A673 (cell line): ENCODE measurements at regions of chr7 and their contacts with region 1.

Region 1: DNA sequence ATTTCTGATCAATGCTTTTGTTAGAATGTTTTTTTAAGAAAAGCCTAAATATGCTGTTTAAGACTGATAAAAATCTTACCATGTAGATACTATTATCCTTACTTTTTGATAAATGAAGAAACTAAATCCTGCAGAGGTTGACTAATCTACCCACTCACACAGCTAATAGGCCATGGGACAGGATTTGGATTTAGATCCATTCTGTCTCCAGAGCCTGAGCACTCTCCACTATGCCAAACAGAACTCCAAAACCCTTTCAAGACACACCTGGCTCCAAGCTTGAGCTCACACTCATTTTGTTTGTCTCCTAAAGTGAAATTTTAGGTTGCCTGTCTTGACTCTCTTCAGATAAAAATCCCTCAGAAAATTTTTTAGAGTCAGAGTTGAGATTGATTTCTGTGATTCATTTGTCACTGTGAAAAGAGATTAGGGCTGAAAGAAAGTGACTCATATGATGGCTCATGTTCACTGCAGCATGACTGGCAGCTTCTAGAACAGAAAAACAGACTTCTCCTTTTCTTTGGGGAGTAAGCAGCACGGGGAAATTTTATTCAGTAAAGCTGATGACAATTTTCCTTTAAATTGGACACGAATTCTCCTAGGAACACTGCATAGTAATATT is 132.3 kb upstream of the POT1 start:
- DNase-seq: peak; percentile 58
- H3K4me3 ChIP-seq: no peak overlapping the region
- H3K27ac ChIP-seq: no peak overlapping the region
- H3K4me1 ChIP-seq: no peaks in the 10 kb centered on the region
- H3K27me3 ChIP-seq: no peaks in the 10 kb centered on the region
- CTCF ChIP-seq: no peak

Region 2: DNA sequence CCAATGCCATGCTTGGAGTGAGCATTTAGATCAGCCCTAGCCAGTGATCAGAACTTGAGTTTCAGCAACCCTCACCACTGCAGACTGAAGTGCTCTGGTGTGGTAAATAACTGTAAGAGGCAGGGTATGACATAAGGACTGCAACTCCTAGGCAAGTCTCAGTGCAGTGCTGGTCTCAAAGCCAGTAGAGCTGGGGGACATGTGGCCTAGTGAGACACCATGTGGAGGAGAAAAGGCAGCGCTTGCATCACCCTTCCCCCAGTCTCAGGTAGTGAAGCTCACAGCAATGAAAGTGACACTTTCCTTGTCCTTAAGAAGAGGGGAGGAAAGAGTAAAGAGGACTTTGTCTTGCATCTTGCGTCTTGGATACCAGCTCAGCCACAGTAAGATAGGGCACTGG is 254.6 kb after region 1 on chr7:
- CTCF ChIA-PET with region 1: no interaction called
- POLR2A ChIA-PET with region 1: no interaction called
- intact Hi-C with region 1: loop called (anchors 2 kb)
- DNase-seq: peak; percentile 38
- H3K4me3 ChIP-seq: no peak overlapping the region
- H3K27ac ChIP-seq: no peak overlapping the region
- H3K4me1 ChIP-seq: no peaks in the 10 kb centered on the region
- H3K27me3 ChIP-seq: no peaks in the 10 kb centered on the region
- CTCF ChIP-seq: peak; percentile 38

Region 3: GRCh38 chr7:125611582-125611981 is 549.7 kb after region 1 on chr7:
- CTCF ChIA-PET with region 1: no interaction called
- POLR2A ChIA-PET with region 1: no interaction called
- intact Hi-C with region 1: no loop called
- DNase-seq: no peak
- H3K4me3 ChIP-seq: no peak overlapping the region
- H3K27ac ChIP-seq: no peak overlapping the region
- H3K4me1 ChIP-seq: no peaks in the 10 kb centered on the region
- H3K27me3 ChIP-seq: no peaks in the 10 kb centered on the region
- CTCF ChIP-seq: no peak

Region 4: DNA sequence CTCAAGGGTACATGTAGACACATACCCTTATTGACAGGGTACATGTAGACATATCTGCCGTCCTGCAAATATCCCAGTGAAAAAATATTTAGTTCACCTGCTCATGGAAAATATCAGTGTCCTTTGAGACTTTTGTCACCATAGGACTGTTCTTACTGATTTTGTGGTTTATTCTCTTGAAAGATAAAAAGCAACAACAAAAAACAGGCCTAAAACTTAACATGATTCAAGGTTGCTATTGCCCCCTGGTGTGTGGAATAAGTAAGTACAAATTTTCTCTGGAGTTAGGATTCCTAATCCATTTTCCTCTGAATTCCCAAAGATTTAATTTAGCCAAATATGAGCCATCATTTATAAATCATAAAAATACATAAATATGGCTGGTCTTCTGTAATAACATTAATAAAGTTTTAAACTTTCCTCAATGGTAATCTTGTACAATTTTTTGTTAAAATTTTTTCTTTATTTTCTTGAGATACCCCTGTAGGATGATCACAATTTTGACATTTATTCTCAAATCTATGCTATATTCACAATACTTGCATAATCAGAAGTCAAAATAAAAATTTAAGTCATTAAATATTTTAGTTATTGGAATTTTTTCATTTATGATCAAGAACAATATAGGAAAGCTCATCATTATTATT is 609.2 kb after region 1 on chr7:
- CTCF ChIA-PET with region 1: no interaction called
- POLR2A ChIA-PET with region 1: no interaction called
- intact Hi-C with region 1: loop called (anchors 2 kb)
- DNase-seq: peak; percentile 55
- H3K4me3 ChIP-seq: no peak overlapping the region
- H3K27ac ChIP-seq: no peak overlapping the region
- H3K4me1 ChIP-seq: no peaks in the 10 kb centered on the region
- H3K27me3 ChIP-seq: no peaks in the 10 kb centered on the region
- CTCF ChIP-seq: peak; percentile 77